Naive thymus-derived CD4-positive, alpha-beta T cell (primary cell): ENCODE measurements at regions of chr4 and their contacts with region 1.

Region 1: GRCh38 chr4:173420324-173420752 is 21.4 kb upstream of the SCRG1 start:
- DNase-seq: peak in 5 of 9 donors; percentile 10 to 40 (median 28)
- ATAC-seq: peak; percentile 37
- H3K4me3 ChIP-seq: no peak overlapping the region
- H3K4me3 Mint-ChIP-seq: peak overlapping the region in 1 of 10 donors; percentile 21
- H3K27ac ChIP-seq: no peak overlapping the region
- H3K27ac Mint-ChIP-seq: peak overlapping the region in 4 of 9 donors; percentile 4 to 22 (median 8)
- H3K4me1 ChIP-seq: peaks cover 2 to 5% of the 10 kb centered on the region in 2 donors
- H3K4me1 Mint-ChIP-seq: peaks cover 6 to 25% (median 6%) of the 10 kb centered on the region in 7 donors
- H3K27me3 ChIP-seq: no peaks in the 10 kb centered on the region
- H3K27me3 Mint-ChIP-seq: peaks cover 0 to 6% (median 0%) of the 10 kb centered on the region in 5 donors

Region 2: DNA sequence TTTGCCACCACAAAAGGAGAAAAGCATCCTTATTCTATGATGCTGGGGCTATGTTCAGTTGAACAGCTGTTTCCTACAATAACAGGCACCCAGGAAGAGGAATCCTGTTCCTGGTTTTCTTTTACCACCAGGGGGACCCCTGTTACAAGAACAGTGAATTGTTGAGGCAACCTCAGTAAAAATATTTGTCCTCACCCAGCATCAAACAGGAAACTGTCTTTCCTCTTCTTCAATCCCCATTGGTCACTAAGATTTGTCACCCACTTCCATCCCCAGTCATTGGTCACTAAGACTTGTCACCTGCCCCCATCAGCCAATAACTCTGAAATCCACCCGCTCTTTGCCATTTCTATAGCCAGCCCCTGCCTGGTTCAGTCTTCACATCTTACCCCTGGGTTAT is 395.2 kb before region 1 on chr4:
- CTCF ChIA-PET with region 1: no interaction called
- POLR2A ChIA-PET with region 1: no interaction called
- intact Hi-C with region 1: loop called in 1 of 2 experiments (anchors 5 kb)
- DNase-seq: peak in 7 of 9 donors; percentile 10 to 50 (median 42)
- ATAC-seq: peak; percentile 67
- H3K4me3 ChIP-seq: no peak overlapping the region
- H3K4me3 Mint-ChIP-seq: no peak overlapping the region
- H3K27ac ChIP-seq: no peak overlapping the region
- H3K27ac Mint-ChIP-seq: no peak overlapping the region
- H3K4me1 ChIP-seq: no peaks in the 10 kb centered on the region
- H3K4me1 Mint-ChIP-seq: peaks cover 0 to 4% (median 0%) of the 10 kb centered on the region in 7 donors
- H3K27me3 ChIP-seq: no peaks in the 10 kb centered on the region
- H3K27me3 Mint-ChIP-seq: peaks cover 0 to 7% (median 5%) of the 10 kb centered on the region in 5 donors

Region 3: GRCh38 chr4:173057901-173058300 is 362.4 kb before region 1 on chr4:
- CTCF ChIA-PET with region 1: no interaction called
- POLR2A ChIA-PET with region 1: no interaction called
- intact Hi-C with region 1: no loop called
- DNase-seq: no peak
- ATAC-seq: no peak
- H3K4me3 ChIP-seq: no peak overlapping the region
- H3K4me3 Mint-ChIP-seq: no peak overlapping the region
- H3K27ac ChIP-seq: no peak overlapping the region
- H3K27ac Mint-ChIP-seq: no peak overlapping the region
- H3K4me1 ChIP-seq: no peaks in the 10 kb centered on the region
- H3K4me1 Mint-ChIP-seq: no peaks in the 10 kb centered on the region
- H3K27me3 ChIP-seq: no peaks in the 10 kb centered on the region
- H3K27me3 Mint-ChIP-seq: peaks cover 0 to 11% (median 3%) of the 10 kb centered on the region in 5 donors

Region 4: GRCh38 chr4:173347467-173347866 is 72.9 kb before region 1 on chr4:
- CTCF ChIA-PET with region 1: no interaction called
- POLR2A ChIA-PET with region 1: no interaction called
- intact Hi-C with region 1: no loop called
- DNase-seq: no peak
- ATAC-seq: no peak
- H3K4me3 ChIP-seq: no peak overlapping the region
- H3K4me3 Mint-ChIP-seq: no peak overlapping the region
- H3K27ac ChIP-seq: no peak overlapping the region
- H3K27ac Mint-ChIP-seq: no peak overlapping the region
- H3K4me1 ChIP-seq: no peaks in the 10 kb centered on the region
- H3K4me1 Mint-ChIP-seq: peaks cover 0 to 4% (median 0%) of the 10 kb centered on the region in 7 donors
- H3K27me3 ChIP-seq: no peaks in the 10 kb centered on the region
- H3K27me3 Mint-ChIP-seq: peaks cover 4 to 40% (median 8%) of the 10 kb centered on the region in 5 donors

Region 5: GRCh38 chr4:173370477-173371291 is 49.7 kb before region 1 on chr4 and contains the start of gene SAP30:
- CTCF ChIA-PET with region 1: interaction called, 3 read pairs
- POLR2A ChIA-PET with region 1: interaction called, 3 read pairs
- intact Hi-C with region 1: loop called (anchors 1 kb)
- DNase-seq: peak; percentile 88 to 97 (median 91)
- ATAC-seq: peak; percentile 91
- H3K4me3 ChIP-seq: peak within 1 kb of the TSS; percentile 99
- H3K4me3 Mint-ChIP-seq: peak within 1 kb of the TSS; percentile 89 to 100 (median 98)
- H3K27ac ChIP-seq: peak within 1 kb of the TSS; percentile 82
- H3K27ac Mint-ChIP-seq: peak within 1 kb of the TSS; percentile 88 to 99 (median 97)
- H3K4me1 ChIP-seq: peaks cover 5 to 20% of the 10 kb centered on the region in 2 donors
- H3K4me1 Mint-ChIP-seq: peaks cover 14 to 46% (median 18%) of the 10 kb centered on the region in 7 donors
- H3K27me3 ChIP-seq: peaks cover 0 to 10% of the 10 kb centered on the region in 2 donors
- H3K27me3 Mint-ChIP-seq: peaks cover 2 to 29% (median 17%) of the 10 kb centered on the region in 5 donors
- total RNA-seq, gene SAP30: 0.48 to 27.4 (median 1.1) TPM

Region 6: DNA sequence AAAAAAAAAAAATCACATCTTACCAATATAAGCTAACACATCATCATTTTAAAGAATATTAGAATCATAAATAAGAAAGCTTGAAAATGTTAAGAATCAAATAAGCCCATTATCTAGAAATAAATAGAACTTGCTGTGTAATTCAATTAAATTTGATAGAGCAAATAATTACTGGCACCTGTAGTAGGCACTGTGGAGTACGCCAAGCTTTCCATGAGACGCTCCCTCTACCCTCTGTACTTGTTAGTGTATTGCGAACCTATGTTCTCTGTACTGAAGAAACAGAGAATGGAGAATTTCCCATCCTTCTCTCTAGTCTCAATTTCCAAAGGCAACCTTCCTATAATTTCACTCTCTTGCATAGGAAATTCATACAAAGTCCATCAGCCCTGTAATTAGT is 171.4 kb after region 1 on chr4:
- CTCF ChIA-PET with region 1: no interaction called
- POLR2A ChIA-PET with region 1: no interaction called
- intact Hi-C with region 1: no loop called
- DNase-seq: no peak
- ATAC-seq: no peak
- H3K4me3 ChIP-seq: no peak overlapping the region
- H3K4me3 Mint-ChIP-seq: no peak overlapping the region
- H3K27ac ChIP-seq: no peak overlapping the region
- H3K27ac Mint-ChIP-seq: no peak overlapping the region
- H3K4me1 ChIP-seq: no peaks in the 10 kb centered on the region
- H3K4me1 Mint-ChIP-seq: no peaks in the 10 kb centered on the region
- H3K27me3 ChIP-seq: no peaks in the 10 kb centered on the region
- H3K27me3 Mint-ChIP-seq: peaks cover 0 to 34% (median 22%) of the 10 kb centered on the region in 5 donors

Region 7: GRCh38 chr4:173698557-173699262 is 278.4 kb after region 1 on chr4:
- CTCF ChIA-PET with region 1: no interaction called
- POLR2A ChIA-PET with region 1: no interaction called
- intact Hi-C with region 1: no loop called
- DNase-seq: no peak
- ATAC-seq: no peak
- H3K4me3 ChIP-seq: no peak overlapping the region
- H3K4me3 Mint-ChIP-seq: no peak overlapping the region
- H3K27ac ChIP-seq: no peak overlapping the region
- H3K27ac Mint-ChIP-seq: no peak overlapping the region
- H3K4me1 ChIP-seq: no peaks in the 10 kb centered on the region
- H3K4me1 Mint-ChIP-seq: no peaks in the 10 kb centered on the region
- H3K27me3 ChIP-seq: no peaks in the 10 kb centered on the region
- H3K27me3 Mint-ChIP-seq: no peaks in the 10 kb centered on the region

Region 8: DNA sequence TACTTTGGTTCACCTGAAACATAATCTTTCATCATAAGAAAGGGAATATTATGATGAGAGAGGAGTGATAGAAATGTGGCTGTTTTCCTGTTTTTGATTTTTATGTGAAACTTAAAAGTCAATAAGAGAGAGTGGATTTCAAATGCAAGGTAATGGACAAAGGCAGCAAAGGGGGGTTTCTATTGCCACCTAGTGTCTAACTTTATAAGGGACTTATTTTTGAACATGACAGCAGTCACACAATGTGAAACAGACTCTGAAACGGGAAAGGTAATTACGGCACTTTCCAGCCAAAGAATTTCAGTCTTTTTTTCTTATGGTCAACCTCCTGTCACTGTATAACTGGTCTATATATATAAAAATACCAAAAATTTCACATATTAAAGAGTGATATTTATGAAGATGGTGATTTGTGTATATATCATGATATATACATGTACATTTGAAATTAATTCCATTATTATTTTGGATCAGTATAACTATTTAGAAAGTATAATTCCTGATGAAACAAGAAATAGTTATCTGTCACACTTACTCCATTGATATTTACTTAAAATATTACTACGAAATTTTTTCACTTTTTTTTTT is 736.0 kb after region 1 on chr4:
- CTCF ChIA-PET with region 1: no interaction called
- POLR2A ChIA-PET with region 1: no interaction called
- intact Hi-C with region 1: loop called in 1 of 2 experiments (anchors 1 kb)
- DNase-seq: peak in 3 of 9 donors; percentile 6 to 18 (median 14)
- ATAC-seq: peak; percentile 31
- H3K4me3 ChIP-seq: no peak overlapping the region
- H3K4me3 Mint-ChIP-seq: no peak overlapping the region
- H3K27ac ChIP-seq: no peak overlapping the region
- H3K27ac Mint-ChIP-seq: no peak overlapping the region
- H3K4me1 ChIP-seq: no peaks in the 10 kb centered on the region
- H3K4me1 Mint-ChIP-seq: no peaks in the 10 kb centered on the region
- H3K27me3 ChIP-seq: no peaks in the 10 kb centered on the region
- H3K27me3 Mint-ChIP-seq: peaks cover 2 to 44% (median 33%) of the 10 kb centered on the region in 5 donors